HEK293 (cell line): ENCODE measurements at regions of chr6 and their contacts with region 1.

Region 1: GRCh38 chr6:34757687-34758274 is 476 bp downstream of the SNRPC start:
- H3K4me3 ChIP-seq: peak overlapping the region; percentile 97
- H3K27ac ChIP-seq: peak overlapping the region; percentile 72
- H3K4me1 ChIP-seq: no peaks in the 10 kb centered on the region
- CTCF ChIP-seq: no peak

Region 2: DNA sequence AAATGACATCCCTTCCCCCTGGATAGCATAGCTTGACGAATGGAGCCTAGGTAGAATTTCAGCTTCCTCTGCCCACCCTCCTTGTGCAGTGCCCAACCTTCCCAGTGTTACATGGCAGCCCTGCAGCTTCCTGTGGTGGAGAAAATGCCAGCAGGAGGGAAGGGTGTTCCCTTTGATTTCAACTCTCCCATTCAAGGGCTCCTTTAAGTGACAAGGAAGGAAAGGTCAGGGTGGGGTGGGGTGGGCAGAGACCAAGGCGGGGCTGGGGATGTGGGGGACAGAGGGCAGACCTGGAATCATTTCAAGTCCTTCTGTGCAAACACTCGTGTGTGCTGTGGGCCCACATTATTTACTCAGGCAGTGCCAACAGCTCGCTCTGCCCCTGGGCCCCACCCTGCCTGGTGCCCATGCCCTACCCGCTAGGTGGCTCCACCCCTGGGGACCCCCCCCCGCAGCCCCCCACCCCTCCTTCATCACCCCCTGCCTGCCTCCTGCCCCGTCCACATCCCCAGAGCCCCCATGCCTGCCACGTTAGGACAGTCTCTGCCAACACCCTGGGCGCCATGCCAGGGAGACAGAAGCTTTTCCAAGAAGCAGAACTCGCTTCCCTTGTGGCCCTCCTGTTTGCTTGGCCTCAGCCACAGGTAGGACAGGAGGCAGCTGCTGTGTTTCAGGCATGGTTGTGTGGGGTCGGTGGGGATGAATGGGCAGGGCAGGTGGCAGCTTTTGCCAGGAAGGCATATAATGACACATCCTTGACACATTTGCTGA is 211.0 kb before region 1 on chr6:
- CTCF ChIA-PET with region 1: no interaction called
- POLR2A ChIA-PET with region 1: no interaction called
- H3K4me3 ChIP-seq: no peak overlapping the region
- H3K27ac ChIP-seq: no peak overlapping the region
- H3K4me1 ChIP-seq: no peaks in the 10 kb centered on the region
- CTCF ChIP-seq: no peak

Region 3: DNA sequence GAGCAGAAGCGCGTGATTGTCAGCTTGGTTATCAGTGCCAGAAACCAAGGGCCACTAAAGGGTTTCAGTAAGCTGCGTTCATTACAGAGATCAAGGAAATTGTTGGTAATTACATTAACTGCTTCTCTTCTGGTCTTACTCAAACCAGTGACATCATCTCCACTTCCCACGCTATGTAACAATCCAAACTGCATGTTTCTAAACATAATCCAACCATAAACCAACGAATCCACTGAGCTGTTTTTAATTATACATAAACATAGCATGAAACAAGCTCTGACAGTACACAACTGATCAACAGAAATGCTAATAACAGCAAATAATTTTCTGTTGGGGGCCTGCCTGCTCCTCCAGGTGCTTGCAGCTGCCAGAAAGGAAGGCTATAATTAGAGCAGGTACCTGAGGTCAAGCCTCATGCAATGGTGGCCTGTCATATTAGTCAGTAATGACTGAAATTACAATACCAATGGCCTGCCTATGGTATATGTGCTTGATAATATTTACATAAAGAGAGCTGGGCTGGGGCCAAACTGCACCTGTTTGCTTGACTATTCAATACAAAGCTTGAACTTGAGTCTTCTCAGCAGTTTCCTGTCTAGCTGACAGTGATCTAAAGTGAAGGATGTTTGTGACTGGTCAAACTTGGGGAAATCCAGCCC is 101.3 kb before region 1 on chr6:
- CTCF ChIA-PET with region 1: no interaction called
- POLR2A ChIA-PET with region 1: interaction called, 15 read pairs
- H3K4me3 ChIP-seq: no peak overlapping the region
- H3K27ac ChIP-seq: peak overlapping the region; percentile 67
- H3K4me1 ChIP-seq: peaks cover 19% of the 10 kb centered on the region
- CTCF ChIP-seq: no peak

Region 4: DNA sequence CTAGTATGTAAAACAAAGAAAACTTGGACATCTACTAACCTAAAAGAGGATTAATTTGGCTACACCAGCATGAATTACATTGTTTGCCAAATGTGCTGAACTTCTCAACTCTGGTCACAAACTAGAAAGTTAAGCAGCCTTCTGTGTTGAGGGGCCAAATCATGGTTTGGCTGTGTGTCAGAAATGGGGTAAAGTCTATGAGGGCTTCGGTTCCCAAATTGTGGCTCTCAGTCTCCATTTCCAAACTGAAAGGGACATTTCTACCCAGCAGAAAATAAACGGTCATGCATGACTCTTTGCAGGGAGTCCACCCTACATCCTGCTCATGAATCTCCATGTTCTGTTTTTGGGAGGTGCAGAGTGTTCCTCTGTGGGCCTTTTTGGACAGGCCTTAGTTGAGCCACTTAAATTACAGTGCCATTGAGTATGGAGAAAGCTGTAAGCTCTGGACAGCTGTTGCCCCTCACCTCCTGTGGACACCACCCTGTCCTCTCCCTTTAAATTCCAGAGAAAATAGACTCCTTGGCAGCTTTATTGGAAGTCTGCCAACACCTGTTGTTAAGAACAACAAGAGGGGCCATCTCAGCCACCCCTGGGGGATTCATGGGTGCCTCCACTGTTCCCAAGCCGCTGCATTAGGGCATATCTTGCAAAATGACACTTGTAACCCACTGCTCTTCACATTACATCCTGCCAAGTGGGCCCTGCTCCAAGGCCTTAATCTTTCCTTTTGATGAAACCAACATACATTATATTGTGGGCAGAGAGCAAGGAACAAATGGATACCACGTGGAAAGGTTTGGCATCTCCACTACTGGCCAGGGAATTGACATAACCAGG is 27.9 kb before region 1 on chr6:
- CTCF ChIA-PET with region 1: no interaction called
- POLR2A ChIA-PET with region 1: no interaction called
- H3K4me3 ChIP-seq: no peak overlapping the region
- H3K27ac ChIP-seq: no peak overlapping the region
- H3K4me1 ChIP-seq: peaks cover 6% of the 10 kb centered on the region; the same call in 1 of the 2 replicates
- CTCF ChIP-seq: no peak

Region 5: DNA sequence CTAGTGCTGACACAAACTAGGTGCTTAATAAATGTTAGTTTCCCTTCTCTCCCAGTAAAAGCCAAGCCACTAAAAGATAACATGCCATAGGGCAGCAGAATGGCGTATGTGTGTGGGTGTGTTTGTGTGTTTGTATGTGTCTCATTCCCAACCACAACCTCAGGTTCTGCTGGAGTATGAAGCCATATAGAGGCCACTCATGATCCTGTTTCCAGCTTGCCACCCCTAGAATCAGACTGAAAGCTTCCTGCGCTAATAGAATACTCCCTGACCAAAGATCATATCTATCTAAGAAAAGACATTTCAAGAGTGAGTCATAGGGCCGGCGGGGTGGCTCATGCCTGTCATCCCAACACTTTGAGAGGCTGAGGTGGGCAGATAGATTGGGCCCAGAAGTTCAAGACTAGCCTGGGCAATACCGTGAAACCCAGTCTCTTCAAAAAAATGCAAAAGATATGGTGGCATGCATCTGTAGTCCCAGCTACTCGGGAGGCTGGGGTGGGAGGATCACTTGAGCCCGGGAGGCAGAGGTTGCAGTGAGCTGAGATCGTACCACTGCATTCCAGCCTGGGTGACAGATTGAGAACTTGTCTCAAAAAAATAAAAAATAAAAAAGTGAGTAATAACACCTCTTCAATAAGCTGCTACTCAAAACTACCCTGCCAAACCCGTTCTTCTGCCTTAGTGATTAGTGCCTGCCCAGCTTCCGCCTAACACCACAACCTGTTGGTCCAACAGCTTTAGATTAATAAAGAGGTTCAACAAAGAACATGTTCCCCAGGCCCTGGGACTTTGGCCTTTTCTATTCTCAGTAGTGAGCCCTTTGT is 12.3 kb before region 1 on chr6:
- CTCF ChIA-PET with region 1: interaction called, 11 read pairs
- POLR2A ChIA-PET with region 1: interaction called, 8 read pairs
- H3K4me3 ChIP-seq: no peak overlapping the region
- H3K27ac ChIP-seq: no peak overlapping the region
- H3K4me1 ChIP-seq: 0 out of 2 replicates have a peak, but pooled peaks cover 3% of the 10 kb centered on the region
- CTCF ChIP-seq: no peak

Region 6: DNA sequence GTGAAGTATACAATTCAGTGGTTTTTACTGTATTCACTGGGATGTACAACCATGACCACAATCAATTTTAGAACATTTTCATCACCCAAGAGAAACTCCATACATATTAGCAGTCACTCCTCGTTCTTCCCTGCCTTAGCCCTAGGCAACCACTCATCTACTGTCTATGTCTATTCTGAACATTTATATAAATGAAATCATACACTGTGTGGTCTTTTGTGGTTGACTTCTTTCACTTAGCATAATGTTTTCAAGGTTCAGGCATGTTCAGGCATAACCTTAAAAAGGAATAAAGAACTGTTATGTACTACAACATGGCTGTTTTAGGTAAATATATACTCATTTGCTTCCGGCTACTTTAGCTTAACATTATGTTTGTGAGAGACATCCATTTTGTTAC is 71.4 kb after region 1 on chr6:
- CTCF ChIA-PET with region 1: no interaction called
- POLR2A ChIA-PET with region 1: no interaction called
- H3K4me3 ChIP-seq: no peak overlapping the region
- H3K27ac ChIP-seq: no peak overlapping the region
- H3K4me1 ChIP-seq: no peaks in the 10 kb centered on the region
- CTCF ChIP-seq: no peak

Region 7: DNA sequence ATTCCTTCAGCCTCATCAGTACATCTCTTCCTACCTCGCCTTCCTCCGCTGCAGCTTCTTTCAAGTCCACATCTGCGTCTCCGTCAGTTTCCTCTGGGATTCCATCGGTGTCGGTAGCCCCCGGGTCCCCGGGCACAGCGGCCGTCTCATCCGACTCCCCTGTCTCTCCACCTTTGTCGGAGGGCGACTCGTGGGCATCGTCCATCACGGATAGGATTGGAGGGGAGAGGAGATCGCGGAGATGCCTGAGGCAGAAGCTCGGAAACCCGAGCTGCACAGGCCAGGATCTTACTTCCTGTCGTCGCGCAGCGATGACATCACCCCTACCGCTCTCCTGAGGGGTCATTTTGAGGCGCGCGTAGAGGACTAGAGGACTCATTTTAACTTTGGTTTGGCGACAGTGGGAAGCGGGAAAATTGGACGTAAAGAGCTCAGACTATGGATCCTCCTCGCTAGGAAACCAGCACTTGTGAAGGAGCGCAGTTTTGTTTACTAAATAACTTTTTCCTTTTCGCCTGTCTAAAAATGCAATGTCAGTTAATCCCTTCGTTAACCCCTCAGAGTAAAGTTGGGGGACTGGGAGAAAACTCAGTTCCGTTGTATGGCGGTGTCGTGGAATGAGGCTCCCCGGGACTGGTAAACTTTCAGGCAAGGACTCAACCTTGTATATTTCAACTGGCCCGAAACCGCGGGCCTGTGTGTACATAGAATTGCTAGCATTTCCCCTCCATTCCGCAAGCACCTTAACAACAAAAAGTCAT is 130.2 kb after region 1 on chr6 and contains the start of gene TAF11:
- CTCF ChIA-PET with region 1: interaction called, 4 read pairs
- POLR2A ChIA-PET with region 1: interaction called, 17 read pairs
- H3K4me3 ChIP-seq: peak within 1 kb of the TSS; percentile 73
- H3K27ac ChIP-seq: peak within 1 kb of the TSS; percentile 78
- H3K4me1 ChIP-seq: peaks cover 2% of the 10 kb centered on the region; the same call in 1 of the 2 replicates
- CTCF ChIP-seq: no peak

Region 8: GRCh38 chr6:35128496-35128895 is 370.7 kb after region 1 on chr6:
- CTCF ChIA-PET with region 1: no interaction called
- POLR2A ChIA-PET with region 1: no interaction called
- H3K4me3 ChIP-seq: no peak overlapping the region
- H3K27ac ChIP-seq: no peak overlapping the region
- H3K4me1 ChIP-seq: no peaks in the 10 kb centered on the region
- CTCF ChIP-seq: no peak